GM12878 (cell line): ENCODE measurements at regions of chr4 and their contacts with region 1.

Region 1: GRCh38 chr4:72112514-72113156 is 80.8 kb downstream of the NPFFR2 start:
- DNase-seq: peak; percentile 88
- ATAC-seq: peak; percentile 94
- H3K4me3 ChIP-seq: no peak overlapping the region
- H3K27ac ChIP-seq: peak overlapping the region; percentile 32; the same call in 1 of the 2 replicates
- H3K4me1 ChIP-seq: no peaks in the 10 kb centered on the region; the same call in 1 of the 2 replicates
- H3K27me3 ChIP-seq: no peaks in the 10 kb centered on the region
- CTCF ChIP-seq: no peak
- EP300 ChIP-seq: peak; percentile 100
- POLR2A ChIP-seq: no peak
- RAD21 ChIP-seq: 0 out of 2 replicates have a peak, but pooled peaks have one; percentile 4

Region 2: DNA sequence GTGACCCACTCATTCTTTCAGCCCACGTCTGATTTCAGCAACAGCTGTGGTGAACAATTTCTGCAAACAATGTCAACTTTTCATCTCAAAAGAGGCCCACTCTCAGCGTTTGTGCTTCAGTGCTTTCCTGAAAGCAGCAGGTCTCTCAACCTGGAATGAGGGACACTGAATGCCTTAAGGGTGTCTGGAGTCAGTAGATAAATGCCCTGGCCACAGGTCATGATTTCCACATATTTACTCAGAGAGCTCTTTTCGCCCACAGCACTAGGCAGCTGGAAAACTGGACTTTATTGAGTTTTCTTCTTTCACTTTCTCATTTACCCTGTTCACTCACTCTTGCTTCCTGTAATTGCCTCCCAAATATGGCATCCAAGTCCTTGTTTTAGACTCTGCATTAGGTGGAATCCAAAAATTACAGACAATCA is 28.0 kb before region 1 on chr4:
- CTCF ChIA-PET with region 1: no interaction called
- POLR2A ChIA-PET with region 1: interaction called, 5 read pairs
- RAD21 ChIA-PET with region 1: interaction called, 3 read pairs
- SMC1A ChIA-PET with region 1: interaction called, 19 read pairs
- in situ Hi-C with region 1: no loop called
- intact Hi-C with region 1: no loop called
- DNase-seq: peak; percentile 13
- ATAC-seq: peak; percentile 91
- H3K4me3 ChIP-seq: no peak overlapping the region
- H3K27ac ChIP-seq: no peak overlapping the region
- H3K4me1 ChIP-seq: no peaks in the 10 kb centered on the region
- H3K27me3 ChIP-seq: no peaks in the 10 kb centered on the region
- CTCF ChIP-seq: no peak
- EP300 ChIP-seq: no peak
- POLR2A ChIP-seq: no peak
- RAD21 ChIP-seq: no peak